ENCODE measurements at regions of chr14 and their contacts with region 1.

Region 1: GRCh38 chr14:51219473-51220448 is 20.3 kb upstream of the TMX1 start:
- DNase-seq: peak in 1 of 10 donors; percentile 19
- H3K4me3 ChIP-seq: peak overlapping the region in 43 of 59 donors; percentile 1 to 54 (median 37)
- H3K27ac ChIP-seq: peak overlapping the region in 6 of 59 donors; percentile 4 to 36 (median 15)
- H3K27me3 ChIP-seq: no peaks in the 10 kb centered on the region
- CTCF ChIP-seq: peak; percentile 59 to 93 (median 76)

Region 2: DNA sequence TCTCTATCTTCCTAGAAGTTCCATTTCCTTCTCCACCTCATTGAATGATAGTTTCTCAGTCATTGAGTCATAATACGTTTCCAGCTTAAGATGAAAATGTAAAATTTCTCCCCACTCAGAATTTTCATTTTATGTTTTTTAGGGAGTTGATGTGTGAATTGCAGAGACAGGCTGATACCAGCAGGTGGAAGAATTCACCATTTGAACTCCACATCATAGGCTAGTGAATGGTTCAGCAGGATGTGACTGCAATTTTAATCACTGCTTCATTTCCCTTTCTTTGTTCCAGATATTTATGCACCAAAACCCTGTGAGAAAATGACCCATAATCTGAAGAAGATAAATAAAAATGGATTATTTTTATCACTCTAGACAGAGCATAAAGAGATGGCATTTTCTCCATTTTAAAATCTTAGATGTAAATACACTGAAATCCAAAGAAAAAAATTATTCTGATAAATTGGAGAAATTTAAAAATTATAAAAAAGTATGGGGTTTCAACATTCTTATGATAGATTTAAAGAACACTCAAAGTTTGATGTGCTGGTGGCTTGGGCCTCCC is 264.9 kb before region 1 on chr14:
- intact Hi-C with region 1: loop called (anchors 1 to 2 kb)
- DNase-seq: peak in 2 of 10 donors; percentile 28 to 30
- H3K4me3 ChIP-seq: no peak overlapping the region
- H3K27ac ChIP-seq: peak overlapping the region in 42 of 59 donors; percentile 6 to 74 (median 48)
- H3K27me3 ChIP-seq: no peaks in the 10 kb centered on the region
- CTCF ChIP-seq: peak; percentile 42 to 87 (median 78)

Region 3: DNA sequence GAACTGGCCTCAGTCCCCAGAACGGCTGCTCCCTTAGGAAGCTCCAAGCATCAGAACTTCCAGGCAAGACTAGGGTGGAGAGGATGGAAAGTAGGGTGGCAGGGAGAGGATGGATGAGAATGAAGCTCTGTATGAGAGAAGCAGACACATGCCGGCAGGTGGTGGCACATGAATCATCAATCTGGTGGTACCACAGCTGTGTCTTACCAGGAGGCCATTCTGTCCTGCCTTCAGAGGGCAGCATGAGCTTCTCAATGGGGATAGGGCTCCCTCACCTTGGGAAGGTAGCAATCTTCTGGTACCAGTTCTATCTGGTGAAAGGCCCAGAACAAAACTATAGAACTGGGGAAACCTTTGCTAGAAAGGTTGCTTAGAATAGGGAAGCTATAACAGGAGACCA is 220.0 kb before region 1 on chr14:
- intact Hi-C with region 1: loop called in 1 of 2 experiments (anchors 10 kb)
- DNase-seq: peak in 8 of 10 donors; percentile 49 to 77 (median 56)
- H3K4me3 ChIP-seq: no peak overlapping the region
- H3K27ac ChIP-seq: peak overlapping the region in 37 of 59 donors; percentile 1 to 68 (median 37)
- H3K27me3 ChIP-seq: no peaks in the 10 kb centered on the region
- CTCF ChIP-seq: peak in 41 of 56 donors; percentile 10 to 67 (median 32)

Region 4: GRCh38 chr14:51167587-51168214 is 52.1 kb before region 1 on chr14:
- intact Hi-C with region 1: no loop called
- DNase-seq: no peak
- H3K4me3 ChIP-seq: no peak overlapping the region
- H3K27ac ChIP-seq: no peak overlapping the region
- H3K27me3 ChIP-seq: no peaks in the 10 kb centered on the region
- CTCF ChIP-seq: no peak

Measured in dorsolateral prefrontal cortex (tissue), 120 donors.